ENCODE measurements at regions of chr11 and their contacts with region 1.

Region 1: GRCh38 chr11:86035164-86035563 is 33.7 kb downstream of the PICALM start:
- DNase-seq: no peak
- H3K4me3 ChIP-seq: no peak overlapping the region
- H3K27ac ChIP-seq: no peak overlapping the region
- H3K4me1 ChIP-seq: no peaks in the 10 kb centered on the region
- H3K27me3 ChIP-seq: no peaks in the 10 kb centered on the region
- CTCF ChIP-seq: no peak

Region 2: DNA sequence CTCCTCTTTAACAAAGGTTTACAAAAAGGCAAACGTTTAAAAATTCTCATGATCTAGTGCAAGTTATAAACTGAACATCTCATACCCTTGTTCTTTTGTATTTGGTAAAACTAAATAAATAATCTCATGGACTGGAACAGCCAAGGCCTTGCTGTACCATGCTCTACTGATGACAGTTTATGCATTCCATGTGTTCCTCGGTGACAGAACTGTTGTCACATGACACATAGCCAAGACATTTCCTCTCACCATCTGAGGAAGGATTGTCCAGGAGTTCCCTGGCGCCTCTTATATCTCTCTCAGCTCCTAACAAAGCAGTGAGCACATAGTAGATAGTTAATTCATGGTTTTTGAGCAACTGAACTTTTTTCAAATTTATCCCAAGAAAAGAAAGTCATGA is 167.4 kb before region 1 on chr11:
- intact Hi-C with region 1: loop called (anchors 10 kb)
- DNase-seq: no peak
- H3K4me3 ChIP-seq: no peak overlapping the region
- H3K27ac ChIP-seq: no peak overlapping the region
- H3K4me1 ChIP-seq: no peaks in the 10 kb centered on the region
- H3K27me3 ChIP-seq: no peaks in the 10 kb centered on the region
- CTCF ChIP-seq: no peak

Region 3: DNA sequence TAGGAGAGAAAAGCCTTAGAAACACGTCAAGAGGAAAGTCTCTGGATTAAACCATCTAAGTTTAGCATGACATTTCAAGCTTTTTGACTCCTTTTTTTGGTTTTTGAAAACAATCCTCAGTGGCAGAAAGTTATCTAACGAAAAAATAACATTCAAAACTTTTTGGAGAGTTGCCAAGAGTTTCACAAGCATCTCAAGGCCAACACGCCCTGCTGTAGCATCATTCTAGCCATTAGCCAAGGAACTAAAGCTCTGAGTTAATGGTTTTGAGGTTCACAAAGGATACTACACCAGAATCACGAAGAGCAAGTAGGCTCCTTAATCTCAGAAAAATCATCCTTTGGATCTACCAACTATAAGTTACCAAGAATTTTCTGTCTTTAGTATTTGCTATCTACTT is 61.0 kb before region 1 on chr11:
- intact Hi-C with region 1: no loop called
- DNase-seq: no peak
- H3K4me3 ChIP-seq: no peak overlapping the region
- H3K27ac ChIP-seq: no peak overlapping the region
- H3K4me1 ChIP-seq: no peaks in the 10 kb centered on the region
- H3K27me3 ChIP-seq: no peaks in the 10 kb centered on the region
- CTCF ChIP-seq: no peak

Region 4: GRCh38 chr11:86014221-86014620 is 20.9 kb before region 1 on chr11:
- intact Hi-C with region 1: no loop called
- DNase-seq: no peak
- H3K4me3 ChIP-seq: no peak overlapping the region
- H3K27ac ChIP-seq: no peak overlapping the region
- H3K4me1 ChIP-seq: no peaks in the 10 kb centered on the region
- H3K27me3 ChIP-seq: no peaks in the 10 kb centered on the region
- CTCF ChIP-seq: no peak

Region 5: GRCh38 chr11:86099874-86100273 is 64.7 kb after region 1 on chr11:
- intact Hi-C with region 1: no loop called
- DNase-seq: peak; percentile 57
- H3K4me3 ChIP-seq: no peak overlapping the region
- H3K27ac ChIP-seq: no peak overlapping the region
- H3K4me1 ChIP-seq: no peaks in the 10 kb centered on the region
- H3K27me3 ChIP-seq: no peaks in the 10 kb centered on the region
- CTCF ChIP-seq: no peak

Region 6: DNA sequence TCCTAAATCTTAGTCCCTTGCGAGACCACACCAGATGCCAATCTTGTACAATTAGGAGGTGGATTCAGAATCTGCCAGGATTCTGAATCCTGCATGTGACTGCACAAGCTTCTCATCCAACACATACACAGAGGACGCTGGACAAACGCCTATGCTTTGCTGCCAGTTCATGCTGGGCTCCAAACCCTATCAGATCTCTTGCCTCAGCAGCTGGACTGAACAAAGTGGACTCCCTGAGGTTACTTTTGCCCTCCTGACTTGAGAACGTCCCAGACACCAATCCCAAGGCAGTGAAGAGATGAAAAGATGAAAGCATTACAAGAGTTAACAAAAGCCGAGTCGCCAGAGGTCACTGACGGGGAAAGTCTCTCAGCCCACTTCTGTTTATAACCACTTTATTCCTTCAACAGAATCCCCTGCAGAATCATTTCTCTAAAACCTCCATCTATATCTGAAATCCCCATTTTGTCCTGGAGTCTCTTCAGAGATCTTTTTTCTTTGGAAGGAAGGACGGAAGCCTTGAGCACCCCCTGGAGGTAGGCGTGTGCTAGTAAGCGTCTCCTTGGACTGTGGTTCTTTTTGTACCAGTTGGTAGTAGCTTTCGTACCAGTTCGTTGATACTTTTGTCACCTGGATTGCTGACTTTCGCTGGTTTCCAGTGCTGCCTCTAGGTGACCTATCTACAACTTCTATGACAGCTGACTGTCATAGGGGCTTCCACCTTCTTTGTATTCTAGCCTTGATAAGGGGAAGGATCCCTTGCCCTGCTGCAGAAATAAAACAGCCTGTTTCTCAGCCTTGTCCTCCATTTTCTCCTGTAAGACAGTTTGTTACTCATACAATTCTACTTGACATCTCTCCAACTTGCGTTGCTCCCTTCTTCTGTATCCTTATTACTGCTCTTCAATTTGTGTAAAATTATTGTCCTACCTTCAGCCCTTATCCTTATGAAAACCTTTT is 183.2 kb after region 1 on chr11:
- intact Hi-C with region 1: loop called (anchors 5 kb)
- DNase-seq: peak; percentile 83
- H3K4me3 ChIP-seq: no peak overlapping the region
- H3K27ac ChIP-seq: no peak overlapping the region
- H3K4me1 ChIP-seq: no peaks in the 10 kb centered on the region
- H3K27me3 ChIP-seq: no peaks in the 10 kb centered on the region
- CTCF ChIP-seq: peak; percentile 84

Region 7: GRCh38 chr11:86548271-86548917 is 513.2 kb after region 1 on chr11:
- intact Hi-C with region 1: no loop called
- DNase-seq: no peak
- H3K4me3 ChIP-seq: no peak overlapping the region
- H3K27ac ChIP-seq: peak overlapping the region; percentile 15
- H3K4me1 ChIP-seq: peaks cover 15% of the 10 kb centered on the region
- H3K27me3 ChIP-seq: no peaks in the 10 kb centered on the region
- CTCF ChIP-seq: no peak